Panc1 (cell line): ENCODE measurements at regions of chr6 and their contacts with region 1.

Region 1: DNA sequence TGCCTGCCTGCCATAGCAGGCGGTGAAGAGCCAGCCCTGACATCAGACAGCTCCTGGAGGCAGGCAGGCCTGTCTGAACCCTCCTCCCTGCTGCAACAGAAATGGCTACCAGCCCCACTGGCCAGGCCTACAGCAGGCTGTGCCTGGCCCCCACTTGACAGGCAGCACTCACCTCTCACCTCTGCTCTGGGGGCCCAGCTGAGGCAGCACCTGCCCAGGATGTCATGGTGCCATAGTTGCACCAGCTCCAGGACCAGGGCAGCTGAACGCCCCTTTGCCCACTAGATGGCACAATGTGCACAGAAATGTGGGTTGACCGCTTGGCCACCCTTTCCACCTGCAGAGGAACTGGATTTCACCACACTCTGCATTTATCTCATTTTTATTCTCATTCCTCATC is 30.6 kb downstream of the MRPL14 start:
- DNase-seq: no peak
- ATAC-seq: peak; percentile 86
- H3K4me3 ChIP-seq: no peak overlapping the region
- H3K27ac ChIP-seq: no peak overlapping the region
- H3K4me1 ChIP-seq: no peaks in the 10 kb centered on the region
- H3K27me3 ChIP-seq: no peaks in the 10 kb centered on the region
- CTCF ChIP-seq: peak; percentile 82

Region 2: GRCh38 chr6:44151348-44152108 is 54.9 kb after region 1 on chr6:
- CTCF ChIA-PET with region 1: interaction called, 5 read pairs
- POLR2A ChIA-PET with region 1: no interaction called
- in situ Hi-C with region 1: no loop called
- intact Hi-C with region 1: loop called (anchors 1 kb)
- DNase-seq: no peak
- ATAC-seq: peak; percentile 86
- H3K4me3 ChIP-seq: no peak overlapping the region
- H3K27ac ChIP-seq: no peak overlapping the region
- H3K4me1 ChIP-seq: peaks cover 9% of the 10 kb centered on the region
- H3K27me3 ChIP-seq: no peaks in the 10 kb centered on the region
- CTCF ChIP-seq: peak; percentile 100

Region 3: DNA sequence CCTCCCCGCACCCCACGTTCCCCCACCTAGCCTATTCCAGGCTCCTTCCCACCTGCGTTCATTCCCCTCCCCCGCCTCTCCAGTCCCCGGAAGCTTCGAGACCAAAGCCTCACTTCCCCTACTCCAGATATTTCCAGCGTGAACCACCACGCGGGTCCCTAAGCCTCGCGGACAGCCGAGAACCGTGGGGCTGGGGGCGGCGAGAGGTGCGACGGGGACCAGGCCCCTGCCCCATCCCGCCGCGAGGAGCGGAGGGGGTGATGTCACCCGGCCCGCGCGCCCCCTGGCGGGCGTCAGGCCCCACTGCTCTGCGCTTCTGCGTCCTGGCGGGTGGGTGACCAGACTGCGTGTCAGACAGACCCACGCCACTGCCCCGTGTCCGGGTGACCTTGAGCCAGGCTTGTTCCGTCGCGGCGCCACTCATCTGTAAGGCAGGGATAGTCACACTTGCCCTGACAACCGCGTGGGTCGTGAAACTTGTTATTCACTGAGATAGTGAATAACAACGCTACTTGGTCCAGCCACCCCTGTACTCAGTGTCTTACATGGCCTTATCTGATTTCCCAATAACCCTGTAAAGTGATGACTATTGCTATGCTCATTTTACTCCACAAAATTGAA is 141.3 kb after region 1 on chr6:
- CTCF ChIA-PET with region 1: no interaction called
- POLR2A ChIA-PET with region 1: no interaction called
- in situ Hi-C with region 1: no loop called
- intact Hi-C with region 1: loop called (anchors 5 kb)
- DNase-seq: no peak
- ATAC-seq: peak; percentile 80
- H3K4me3 ChIP-seq: peak overlapping the region; percentile 49 to 67
- H3K27ac ChIP-seq: peak overlapping the region; percentile 92
- H3K4me1 ChIP-seq: peaks cover 53% of the 10 kb centered on the region
- H3K27me3 ChIP-seq: no peaks in the 10 kb centered on the region
- CTCF ChIP-seq: peak; percentile 98

Region 4: DNA sequence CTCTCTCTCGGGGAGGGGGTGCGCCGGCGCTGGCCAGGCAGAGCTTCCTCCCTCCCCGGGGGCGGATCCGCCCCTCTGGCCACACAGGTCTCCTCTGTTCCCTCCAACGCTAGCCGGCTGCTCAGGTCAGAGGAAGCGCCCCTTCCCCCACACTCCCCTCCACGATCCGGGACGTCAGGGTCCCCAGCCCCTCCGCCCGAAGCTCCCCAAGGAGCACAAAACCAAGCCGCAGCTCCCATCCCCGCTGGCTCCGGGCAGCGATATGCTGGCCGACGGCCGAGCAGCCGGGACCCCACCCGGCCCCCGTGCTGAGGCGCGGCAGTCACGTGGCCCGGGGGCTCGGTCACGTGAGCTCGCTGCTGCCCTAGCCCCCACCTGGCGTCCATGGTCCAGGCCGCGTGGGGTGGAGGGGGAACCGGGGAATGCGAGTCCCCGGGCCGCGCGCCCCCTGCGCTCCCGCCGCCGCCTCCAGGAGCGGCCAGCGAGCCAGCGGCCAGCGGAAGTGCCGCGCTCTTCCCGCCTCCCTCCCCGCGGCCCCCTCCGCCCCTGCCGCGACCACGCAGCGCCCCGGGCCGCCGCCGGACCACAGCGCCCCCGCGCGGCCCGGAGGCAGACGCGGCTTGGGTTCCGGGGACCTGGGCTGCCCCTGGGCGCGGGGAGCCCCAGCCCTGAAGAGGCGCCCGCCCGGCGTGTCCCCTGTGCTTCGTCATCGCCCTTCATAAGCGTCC is 160.6 kb after region 1 on chr6 and contains the start of gene SLC35B2:
- CTCF ChIA-PET with region 1: interaction called, 6 read pairs
- POLR2A ChIA-PET with region 1: no interaction called
- in situ Hi-C with region 1: no loop called
- intact Hi-C with region 1: loop called (anchors 10 kb)
- DNase-seq: no peak
- ATAC-seq: peak; percentile 75
- H3K4me3 ChIP-seq: peak within 1 kb of the TSS; percentile 87 to 95
- H3K27ac ChIP-seq: peak within 1 kb of the TSS; percentile 83
- H3K4me1 ChIP-seq: peaks cover 42% of the 10 kb centered on the region
- H3K27me3 ChIP-seq: no peaks in the 10 kb centered on the region
- CTCF ChIP-seq: peak; percentile 98
- total RNA-seq, gene SLC35B2: 105 TPM